WTC11 (cell line): ENCODE measurements at regions of chrX and their contacts with region 1.

Region 1: DNA sequence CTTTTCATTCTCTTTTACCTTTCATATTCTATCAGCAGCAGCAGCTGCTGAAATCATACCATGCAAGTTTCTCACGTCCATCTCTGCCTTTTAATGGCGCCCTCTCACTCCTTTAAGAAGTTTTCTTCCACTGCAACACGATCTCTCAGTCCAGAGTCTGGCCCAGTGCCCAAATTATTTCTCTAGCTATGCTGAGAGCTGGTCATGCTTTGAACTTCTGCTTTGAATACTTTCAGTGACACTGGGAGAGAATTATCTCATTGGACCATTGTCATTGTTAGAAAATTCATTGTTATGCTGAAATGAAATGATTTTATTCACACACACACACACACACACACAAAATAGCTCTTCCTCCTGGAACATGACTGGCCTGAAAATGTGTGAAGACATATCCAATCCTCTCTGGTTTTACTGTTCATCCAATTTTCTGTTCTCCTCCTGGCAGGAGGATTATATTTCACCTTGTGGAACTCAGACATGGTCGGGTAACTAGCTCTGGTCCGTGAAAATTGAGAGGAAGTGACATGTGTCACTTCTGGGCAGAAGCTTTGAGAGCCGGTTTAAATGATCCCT is 1.3 kb upstream of the PDHA1 start:
- DNase-seq: no peak
- ATAC-seq: no peak
- H3K4me3 Mint-ChIP-seq: peak overlapping the region; percentile 80
- H3K27ac Mint-ChIP-seq: no peak overlapping the region
- H3K4me1 Mint-ChIP-seq: peaks cover 8% of the 10 kb centered on the region
- H3K27me3 Mint-ChIP-seq: no peaks in the 10 kb centered on the region
- CTCF ChIP-seq: no peak

Region 2: GRCh38 chrX:19110642-19111041 is 231.8 kb before region 1 on chrX:
- CTCF ChIA-PET with region 1: no interaction called
- POLR2A ChIA-PET with region 1: interaction called, 12 read pairs
- DNase-seq: no peak
- ATAC-seq: no peak
- H3K4me3 Mint-ChIP-seq: no peak overlapping the region
- H3K27ac Mint-ChIP-seq: no peak overlapping the region
- H3K4me1 Mint-ChIP-seq: peaks cover 32% of the 10 kb centered on the region
- H3K27me3 Mint-ChIP-seq: no peaks in the 10 kb centered on the region
- CTCF ChIP-seq: no peak